ENCODE measurements at regions of chr15 and their contacts with region 1.

Region 1: DNA sequence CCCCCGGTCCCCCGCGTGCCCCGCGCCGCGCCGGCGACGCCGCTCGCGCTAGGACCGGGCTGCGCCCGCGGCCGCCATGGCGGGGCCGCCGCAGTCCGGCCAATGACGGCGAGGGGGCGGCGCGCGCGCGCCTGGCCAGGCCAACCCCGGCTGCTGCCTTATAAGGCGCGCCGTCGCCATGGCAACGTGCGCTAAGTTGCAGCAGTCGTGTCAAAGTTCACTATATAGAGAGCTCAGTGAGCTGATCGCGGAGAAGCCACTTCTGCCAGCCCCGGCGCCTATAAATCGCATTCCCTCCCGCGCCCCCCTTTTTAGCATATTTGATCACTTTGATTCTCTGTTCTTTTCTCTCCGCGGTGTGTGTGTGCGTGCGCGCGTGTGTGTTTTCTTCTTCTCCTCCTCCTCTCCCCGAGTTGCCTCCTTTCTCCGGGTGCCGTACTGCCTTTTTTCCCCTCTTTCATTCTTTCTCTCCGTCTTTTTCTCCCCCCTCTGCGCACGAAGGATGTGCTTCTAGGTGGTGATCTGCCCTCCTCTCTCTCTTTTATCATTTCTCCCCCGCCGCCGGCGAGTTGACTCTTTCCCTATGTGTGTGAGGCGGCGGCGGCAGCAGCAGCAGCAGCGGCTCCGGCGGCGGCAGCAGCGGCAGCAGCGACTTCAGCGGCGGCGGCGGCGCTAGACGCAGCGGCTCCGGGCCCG is at the start of gene NR2F2:
- DNase-seq: peak; percentile 95
- H3K4me3 ChIP-seq: peak within 1 kb of the TSS; percentile 95
- CTCF ChIP-seq: no peak

Region 2: DNA sequence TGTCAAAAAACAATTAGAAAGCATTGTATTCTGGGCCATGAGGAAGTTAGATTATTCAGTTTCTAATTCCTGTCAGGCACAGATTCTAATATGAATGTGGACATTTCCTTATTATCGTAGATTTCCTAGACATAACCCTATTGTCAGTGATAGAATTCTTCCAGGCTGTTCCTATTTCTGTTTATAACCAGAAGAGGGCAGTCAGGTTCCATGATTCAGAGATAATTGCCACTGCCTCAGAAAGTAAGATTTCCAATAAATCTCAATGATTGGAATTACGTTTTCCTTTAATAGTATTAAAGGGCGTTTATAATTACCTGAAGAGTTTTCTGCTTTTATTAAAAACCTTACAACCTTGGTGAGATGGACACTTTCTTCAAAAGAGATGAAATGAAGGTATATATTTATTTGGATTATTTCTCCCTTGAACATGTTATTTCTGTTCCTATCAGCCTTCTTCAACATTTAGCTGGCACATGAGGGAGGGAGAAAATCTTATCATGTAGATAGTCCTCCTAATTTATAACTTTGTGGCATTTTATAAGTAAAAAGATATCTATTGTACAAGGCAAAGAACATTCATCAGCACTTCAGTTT is 1660.1 kb before region 1 on chr15:
- in situ Hi-C with region 1: loop called (anchors 25 kb)
- DNase-seq: peak; percentile 39
- H3K4me3 ChIP-seq: no peak overlapping the region
- CTCF ChIP-seq: peak; percentile 57

Region 3: GRCh38 chr15:95259965-95260364 is 1070.6 kb before region 1 on chr15:
- in situ Hi-C with region 1: loop called (anchors 10 kb)
- DNase-seq: no peak
- H3K4me3 ChIP-seq: no peak overlapping the region
- CTCF ChIP-seq: no peak

Region 4: GRCh38 chr15:97234851-97235610 is 904.4 kb after region 1 on chr15:
- in situ Hi-C with region 1: loop called (anchors 25 kb)
- DNase-seq: peak; percentile 43
- H3K4me3 ChIP-seq: no peak overlapping the region
- CTCF ChIP-seq: peak; percentile 91

Measured in astrocyte of the cerebellum (primary cell).